ENCODE measurements at regions of chr3 and their contacts with region 1.

Region 1: DNA sequence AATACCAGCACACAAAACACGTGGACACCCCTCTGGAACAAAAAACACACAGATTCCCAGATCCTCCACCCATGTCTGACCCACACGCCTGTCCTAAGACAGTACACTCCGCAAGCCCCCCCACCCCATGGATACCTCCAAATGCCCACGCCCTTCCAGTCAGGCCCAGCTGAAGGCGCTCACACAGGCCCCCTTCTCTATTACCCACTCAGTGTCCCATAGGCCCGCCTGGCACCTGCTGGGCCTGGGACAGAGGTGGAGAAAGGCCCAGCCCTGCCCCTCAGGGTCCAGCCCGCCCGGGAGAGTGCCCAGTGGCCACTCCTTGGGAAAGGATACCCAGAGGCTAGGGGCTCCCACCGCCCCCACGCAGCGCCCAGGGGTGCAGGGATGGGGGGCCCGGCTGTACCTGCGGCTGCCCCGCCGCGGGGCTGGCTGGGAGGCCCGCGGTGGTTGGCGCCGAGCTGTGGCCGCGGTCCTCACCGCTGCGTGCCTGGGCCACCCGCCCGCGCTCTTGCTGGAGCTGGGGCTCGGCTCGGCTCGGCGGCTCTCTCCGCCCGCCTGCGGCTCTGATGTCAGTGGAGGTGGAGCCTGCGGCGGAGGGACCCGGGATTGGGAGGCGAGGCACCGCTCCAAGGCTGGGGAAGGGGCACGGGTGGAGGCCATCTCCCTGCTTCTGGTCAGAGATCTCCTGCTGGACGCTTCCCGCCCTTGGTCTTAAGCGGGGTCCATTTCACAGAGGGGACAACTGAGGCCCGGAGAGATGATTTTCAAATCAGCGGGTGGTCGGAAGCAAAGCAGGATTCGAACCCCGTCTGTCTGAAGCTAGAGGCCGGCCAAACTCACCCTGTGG is at the start of gene CAMK1:
- DNase-seq: no peak
- H3K4me3 ChIP-seq: peak within 1 kb of the TSS; percentile 67
- H3K27ac ChIP-seq: no peak within 1 kb of the TSS
- H3K27me3 ChIP-seq: no peaks in the 10 kb centered on the region
- CTCF ChIP-seq: no peak
- polyA plus RNA-seq, gene CAMK1: 26.8 and 28.7 TPM in 2 replicates

Region 2: DNA sequence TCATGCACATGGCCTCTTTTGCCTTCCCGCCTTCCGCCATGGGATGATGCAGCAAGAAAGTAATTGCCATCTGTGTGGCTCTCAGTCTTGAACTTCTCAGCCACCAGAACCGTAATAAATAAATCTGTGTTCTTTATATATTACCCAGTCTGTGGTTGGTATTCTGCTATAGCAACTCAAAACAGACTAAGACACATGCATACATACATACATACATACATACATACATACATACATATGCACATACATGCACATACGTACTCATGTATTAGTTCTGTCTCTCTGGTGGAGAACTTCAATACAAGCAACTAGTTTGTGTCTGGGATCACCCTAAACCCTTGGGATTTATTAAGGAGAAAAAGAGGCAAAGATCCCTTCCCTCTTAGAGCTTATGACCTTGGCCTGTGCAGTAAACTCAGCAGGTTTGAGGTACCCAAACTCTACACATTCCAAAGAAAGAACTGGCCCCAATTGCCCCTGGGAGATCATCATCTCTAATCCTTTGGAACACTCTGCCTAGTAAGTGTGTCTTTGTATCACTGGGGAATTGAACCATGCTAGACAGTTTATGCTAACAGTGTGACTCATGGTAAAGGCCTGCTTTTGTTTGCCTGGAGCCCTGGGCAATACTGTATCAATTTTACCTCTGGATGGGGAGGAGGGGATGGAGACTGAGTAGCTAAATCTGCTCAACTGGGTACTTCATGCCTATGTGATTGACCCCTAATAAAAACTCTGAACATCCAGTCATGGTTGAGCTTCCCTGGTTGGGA is 1383.6 kb before region 1 on chr3:
- CTCF ChIA-PET with region 1: no interaction called
- POLR2A ChIA-PET with region 1: no interaction called
- DNase-seq: peak; percentile 7
- H3K4me3 ChIP-seq: no peak overlapping the region
- H3K27ac ChIP-seq: no peak overlapping the region
- H3K27me3 ChIP-seq: peaks cover 3% of the 10 kb centered on the region
- CTCF ChIP-seq: no peak

Region 3: GRCh38 chr3:10503217-10503796 is 733.7 kb after region 1 on chr3:
- CTCF ChIA-PET with region 1: no interaction called
- POLR2A ChIA-PET with region 1: interaction called, 14 read pairs
- DNase-seq: no peak
- H3K4me3 ChIP-seq: no peak overlapping the region
- H3K27ac ChIP-seq: no peak overlapping the region
- H3K27me3 ChIP-seq: peaks cover 63% of the 10 kb centered on the region
- CTCF ChIP-seq: no peak